ENCODE measurements at regions of chrX and their contacts with region 1.

Region 1: DNA sequence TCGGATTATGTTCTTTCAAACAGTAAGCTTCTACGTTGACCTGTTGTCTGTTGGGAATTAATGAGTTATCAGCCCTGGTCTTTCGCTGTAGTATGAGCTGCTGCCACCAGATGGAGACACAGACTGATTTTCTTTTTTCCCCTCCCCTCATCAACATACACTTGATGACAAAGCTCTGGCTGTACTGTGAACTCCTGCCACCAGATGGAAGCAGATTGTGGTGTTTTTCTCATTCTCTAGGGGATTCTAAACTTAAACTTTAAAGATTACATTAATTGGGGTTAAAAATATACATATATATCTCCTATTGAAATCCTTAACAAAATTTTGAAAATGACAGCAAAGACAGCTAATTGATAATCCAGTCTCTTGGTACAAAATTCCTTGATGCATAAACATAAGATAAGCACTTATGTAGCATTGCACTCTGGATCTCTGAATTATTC is 44.8 kb downstream of the SMS start:
- DNase-seq: no peak
- H3K4me3 ChIP-seq: no peak overlapping the region
- CTCF ChIP-seq: peak; percentile 62

Region 2: DNA sequence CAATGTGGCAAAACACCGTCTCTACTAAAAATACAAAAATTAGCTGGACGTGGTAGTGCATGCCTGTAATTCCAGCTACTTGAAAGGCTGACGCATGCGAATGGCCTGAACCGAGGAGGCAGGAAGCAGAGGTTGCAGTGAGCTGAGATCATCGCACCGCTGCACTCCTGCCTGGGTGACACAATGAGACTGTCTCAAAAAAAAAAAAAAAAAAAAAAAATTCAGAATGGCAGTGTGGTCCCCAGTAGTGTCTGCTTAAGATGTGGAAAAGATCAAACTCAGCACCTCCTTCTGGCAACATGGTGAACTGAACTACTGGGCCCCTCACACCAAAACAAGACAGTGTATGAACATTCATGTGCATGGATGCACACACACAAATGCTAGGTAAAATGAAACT is 12.6 kb before region 1 on chrX:
- CTCF ChIA-PET with region 1: interaction called, 22 read pairs
- POLR2A ChIA-PET with region 1: no interaction called
- DNase-seq: peak; percentile 47
- H3K4me3 ChIP-seq: no peak overlapping the region
- CTCF ChIP-seq: no peak

Region 3: DNA sequence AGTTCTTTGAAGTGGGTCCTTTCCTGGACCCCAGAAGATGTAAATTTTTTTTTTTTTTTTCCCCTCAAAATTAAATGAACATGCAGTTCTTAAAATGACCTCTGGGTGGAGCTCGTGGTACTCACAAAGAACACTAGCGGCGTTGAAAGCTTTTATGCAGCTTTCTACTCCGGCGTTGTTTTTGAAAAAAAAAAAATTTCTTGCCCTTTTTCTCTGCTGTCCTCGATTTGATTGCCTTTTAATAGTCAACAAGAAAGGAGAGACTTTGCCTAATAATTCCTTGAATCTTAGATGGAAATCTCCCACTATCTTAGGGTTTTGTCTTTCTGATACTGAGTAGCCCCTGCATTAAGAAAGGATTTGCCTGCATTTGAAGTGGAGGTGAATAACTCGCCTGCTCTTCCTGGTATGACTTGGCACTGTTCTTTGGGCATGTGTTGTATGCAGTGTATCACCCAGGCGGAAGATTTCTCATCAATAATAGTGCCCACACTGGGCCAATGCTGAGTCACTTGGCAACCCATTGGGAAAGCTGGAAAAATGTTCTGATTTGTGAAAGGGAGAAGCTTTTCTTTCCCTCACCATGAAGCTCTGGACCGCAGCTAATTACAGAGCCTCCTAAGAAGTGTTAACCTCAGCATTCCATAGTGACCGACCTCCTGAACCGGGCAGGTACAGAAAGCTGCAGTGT is 150.8 kb after region 1 on chrX:
- CTCF ChIA-PET with region 1: interaction called, 18 read pairs
- POLR2A ChIA-PET with region 1: no interaction called
- DNase-seq: no peak
- H3K4me3 ChIP-seq: no peak overlapping the region
- CTCF ChIP-seq: no peak

Region 4: DNA sequence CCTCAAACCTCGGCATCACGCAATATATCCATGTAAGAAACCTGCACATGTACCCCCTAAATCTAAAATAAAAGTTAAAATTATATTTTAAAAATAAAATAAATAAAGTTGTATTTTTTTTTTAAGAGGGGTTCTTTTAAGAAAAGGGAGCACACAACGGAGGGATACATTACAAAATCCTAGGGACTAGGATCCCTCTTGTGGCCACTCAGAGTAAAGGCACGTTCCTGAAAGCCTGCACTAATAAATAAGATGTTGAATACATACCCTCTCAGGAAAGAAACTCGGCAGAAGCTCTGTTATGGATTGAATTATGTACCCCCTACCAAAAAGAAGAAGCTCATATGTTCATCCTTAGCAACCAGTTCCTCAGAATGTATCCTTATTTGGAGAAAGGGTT is 1631.0 kb after region 1 on chrX:
- CTCF ChIA-PET with region 1: interaction called, 15 read pairs
- POLR2A ChIA-PET with region 1: no interaction called
- DNase-seq: no peak
- H3K4me3 ChIP-seq: no peak overlapping the region
- CTCF ChIP-seq: peak; percentile 23

Measured in AG04449 (cell line).